Astrocyte of the cerebellum (primary cell): ENCODE measurements at regions of chr17 and their contacts with region 1.

Region 1: GRCh38 chr17:1190751-1191331 is 11.1 kb upstream of the ABR start:
- DNase-seq: no peak
- H3K4me3 ChIP-seq: no peak overlapping the region
- CTCF ChIP-seq: no peak

Region 2: DNA sequence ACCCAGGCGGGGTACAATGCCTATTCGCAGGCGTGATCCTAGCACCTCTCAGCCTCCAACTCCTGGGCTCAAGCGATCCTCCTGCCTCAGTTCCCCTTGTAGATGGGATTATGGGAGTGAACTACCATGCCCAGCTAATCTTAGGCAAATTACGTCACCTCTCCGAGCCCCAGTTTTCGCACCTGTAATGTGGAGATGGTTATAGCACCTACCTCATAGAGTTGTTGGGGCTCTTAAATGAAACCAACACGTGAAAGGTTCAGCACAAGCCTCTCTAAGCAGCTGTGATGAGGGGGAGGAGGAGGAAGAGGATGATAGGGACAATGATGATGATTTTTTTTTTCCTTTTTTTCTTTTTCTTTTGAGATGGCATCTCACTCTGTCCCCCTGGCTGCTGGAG is 70.9 kb before region 1 on chr17:
- in situ Hi-C with region 1: loop called (anchors 5 kb)
- DNase-seq: no peak
- H3K4me3 ChIP-seq: no peak overlapping the region
- CTCF ChIP-seq: no peak

Region 3: GRCh38 chr17:1229432-1229899 is 38.6 kb after region 1 on chr17:
- in situ Hi-C with region 1: no loop called
- DNase-seq: no peak
- H3K4me3 ChIP-seq: peak overlapping the region; percentile 24
- CTCF ChIP-seq: no peak

Region 4: GRCh38 chr17:1251866-1252608 is 61.2 kb after region 1 on chr17:
- in situ Hi-C with region 1: no loop called
- DNase-seq: no peak
- H3K4me3 ChIP-seq: no peak overlapping the region
- CTCF ChIP-seq: no peak